ENCODE measurements at regions of chr3 and their contacts with region 1.

Region 1: DNA sequence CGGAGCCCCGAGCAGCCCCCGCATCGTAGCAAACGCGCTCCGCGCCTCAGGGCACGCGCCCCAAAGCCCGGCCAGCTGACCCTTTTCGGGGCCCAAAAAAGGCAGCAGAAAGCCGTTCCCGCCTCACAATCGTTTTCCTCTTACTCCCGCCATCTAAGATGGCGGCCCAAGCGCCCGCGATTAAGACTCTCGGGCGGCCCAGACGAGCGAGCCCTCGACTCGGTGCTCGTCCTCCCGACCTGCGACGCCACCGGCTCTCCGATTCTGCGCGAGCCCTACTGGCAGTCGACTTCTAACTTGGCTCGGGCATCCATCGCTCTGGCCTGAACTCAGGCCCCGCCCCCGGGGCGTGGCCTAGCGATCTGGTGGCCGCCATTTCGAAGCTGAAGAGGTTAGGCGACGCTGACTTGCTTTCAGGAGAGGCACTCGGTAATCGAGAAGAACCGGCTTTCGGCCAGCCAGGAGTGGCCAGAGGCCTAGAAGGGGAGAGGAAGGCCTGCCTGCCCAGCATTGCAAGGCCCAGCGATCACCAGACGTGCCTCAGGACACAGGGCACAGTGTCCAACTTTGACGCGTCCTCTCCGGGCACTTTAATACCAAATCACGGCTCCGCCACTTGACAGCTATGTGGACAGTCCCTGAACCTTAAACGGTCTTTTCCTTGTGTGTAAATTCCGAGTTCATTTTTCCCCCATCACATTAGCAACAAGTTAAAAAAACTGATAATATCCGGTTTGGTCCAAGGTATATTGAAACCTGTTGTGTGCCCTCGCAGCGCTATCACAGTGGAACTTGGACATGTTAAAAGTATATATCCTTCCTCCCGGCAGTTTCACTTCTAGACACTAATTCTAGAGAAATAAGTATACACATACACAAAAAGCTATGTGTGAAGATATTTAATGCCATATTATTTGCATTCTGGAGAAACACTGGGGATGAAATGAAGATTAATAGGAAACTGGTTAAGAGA is at the start of gene RAF1:
- DNase-seq: peak; percentile 99
- H3K4me3 Mint-ChIP-seq: peak within 1 kb of the TSS; percentile 88
- H3K27ac Mint-ChIP-seq: peak within 1 kb of the TSS; percentile 99
- H3K4me1 Mint-ChIP-seq: peaks cover 28% of the 10 kb centered on the region
- H3K27me3 Mint-ChIP-seq: no peaks in the 10 kb centered on the region
- total RNA-seq, gene RAF1: 90.5 and 93.2 TPM in 2 replicates

Region 2: GRCh38 chr3:12556671-12557472 is 107.3 kb before region 1 on chr3 and contains the start of gene MKRN2:
- intact Hi-C with region 1: loop called (anchors 1 kb)
- DNase-seq: peak; percentile 96
- H3K4me3 Mint-ChIP-seq: peak within 1 kb of the TSS; percentile 98
- H3K27ac Mint-ChIP-seq: peak within 1 kb of the TSS; percentile 91
- H3K4me1 Mint-ChIP-seq: peaks cover 44% of the 10 kb centered on the region
- H3K27me3 Mint-ChIP-seq: peaks cover 25% of the 10 kb centered on the region
- total RNA-seq, gene MKRN2: 23.2 and 28.2 TPM in 2 replicates

Region 3: GRCh38 chr3:12608376-12608775 is 55.8 kb before region 1 on chr3:
- intact Hi-C with region 1: loop called (anchors 5 kb)
- DNase-seq: no peak
- H3K4me3 Mint-ChIP-seq: no peak overlapping the region
- H3K27ac Mint-ChIP-seq: no peak overlapping the region
- H3K4me1 Mint-ChIP-seq: peaks cover 10% of the 10 kb centered on the region
- H3K27me3 Mint-ChIP-seq: no peaks in the 10 kb centered on the region

Region 4: DNA sequence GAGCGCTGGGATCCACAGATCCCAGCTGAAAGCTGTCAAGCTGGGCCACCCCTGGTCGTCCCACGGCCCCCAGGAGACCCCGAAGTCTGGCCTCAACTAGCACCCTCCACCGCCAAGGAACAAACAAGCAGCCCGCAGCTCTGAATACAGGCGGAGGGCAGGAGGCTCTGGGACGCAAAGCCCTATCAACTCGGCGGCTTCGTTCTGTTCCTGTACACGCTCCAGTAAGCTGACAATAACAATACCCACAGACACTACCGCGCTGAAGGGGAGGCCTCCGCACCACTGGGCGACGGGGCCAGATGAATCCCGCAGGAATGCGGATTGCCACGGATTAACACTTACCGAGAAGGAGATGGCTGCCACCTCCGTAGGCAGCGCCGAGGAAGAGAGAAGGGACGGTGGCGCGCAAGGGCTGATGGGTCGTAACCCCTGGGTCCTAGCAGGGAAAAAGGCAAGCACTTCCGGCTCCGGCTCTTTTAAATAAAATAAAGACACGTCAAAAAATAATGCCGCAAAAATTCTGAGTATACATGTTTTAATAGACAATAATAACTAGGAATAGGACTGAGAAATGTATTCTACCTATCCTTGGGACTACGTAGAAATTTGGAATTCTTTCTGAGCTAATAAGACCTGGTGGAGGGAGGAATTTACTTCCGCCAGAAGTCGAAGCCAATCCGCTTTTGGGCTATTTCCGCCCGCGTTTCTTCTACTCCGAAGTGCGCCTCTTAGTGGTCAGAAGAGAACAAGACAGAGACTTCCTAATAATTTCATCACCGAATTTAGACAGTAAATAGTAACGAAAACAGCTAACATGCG is 177.1 kb after region 1 on chr3 and contains the start of gene RPL32:
- intact Hi-C with region 1: loop called (anchors 1 kb)
- DNase-seq: peak; percentile 95
- H3K4me3 Mint-ChIP-seq: peak within 1 kb of the TSS; percentile 97
- H3K27ac Mint-ChIP-seq: peak within 1 kb of the TSS; percentile 99
- H3K4me1 Mint-ChIP-seq: peaks cover 38% of the 10 kb centered on the region
- H3K27me3 Mint-ChIP-seq: no peaks in the 10 kb centered on the region
- total RNA-seq, gene RPL32: 2,085 and 2,113 TPM in 2 replicates

Measured in activated CD4-positive, alpha-beta T cell treated with anti-CD3 and anti-CD28 coated beads, Interleukin-2, amount 10 ng/mL, durations not matched to agents 24 days and 14 days (primary cell).